ENCODE measurements at regions of chr20 and their contacts with region 1.

Region 1: GRCh38 chr20:63864847-63865640 is at the start of gene TPD52L2:
- DNase-seq: peak; percentile 100
- total RNA-seq, gene TPD52L2: 72.0 TPM

Region 2: GRCh38 chr20:63782051-63782471 is 83.0 kb before region 1 on chr20:
- intact Hi-C with region 1: loop called (anchors 1 kb)
- DNase-seq: no peak

Region 3: GRCh38 chr20:63829932-63830835 is 34.9 kb before region 1 on chr20:
- intact Hi-C with region 1: loop called (anchors 5 kb)
- DNase-seq: no peak